ENCODE measurements at regions of chr12 and their contacts with region 1.

Region 1: DNA sequence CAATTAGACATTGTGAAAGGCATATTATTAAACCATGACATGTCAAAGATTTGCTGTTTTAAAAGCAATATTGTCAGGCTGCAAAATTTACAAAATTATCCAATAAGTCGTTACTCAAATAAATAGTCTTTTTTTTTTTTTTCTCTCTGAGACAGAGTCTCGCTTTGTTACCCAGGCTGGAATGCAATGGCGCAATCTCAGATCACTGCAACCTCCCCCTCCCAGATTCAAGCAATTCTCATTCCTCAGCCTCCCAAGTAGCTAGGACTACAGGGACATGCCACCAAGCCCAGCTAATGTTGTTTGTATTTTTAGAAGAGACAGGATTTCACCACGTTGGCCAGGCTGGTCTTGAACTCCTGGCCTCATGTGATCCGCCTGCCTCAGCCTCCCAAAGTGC is 216.2 kb upstream of the KITLG start:
- DNase-seq: peak; percentile 7
- ATAC-seq: no peak
- H3K4me3 ChIP-seq: no peak overlapping the region
- H3K27ac ChIP-seq: no peak overlapping the region
- H3K4me1 ChIP-seq: no peaks in the 10 kb centered on the region
- H3K27me3 ChIP-seq: no peaks in the 10 kb centered on the region
- CTCF ChIP-seq: no peak
- EP300 ChIP-seq: no peak
- POLR2A ChIP-seq: no peak
- RAD21 ChIP-seq: no peak

Region 2: GRCh38 chr12:88453323-88453722 is 343.1 kb before region 1 on chr12:
- CTCF ChIA-PET with region 1: no interaction called
- POLR2A ChIA-PET with region 1: no interaction called
- in situ Hi-C with region 1: no loop called
- intact Hi-C with region 1: loop called (anchors 5 kb)
- DNase-seq: no peak
- ATAC-seq: no peak
- H3K4me3 ChIP-seq: no peak overlapping the region
- H3K27ac ChIP-seq: no peak overlapping the region
- H3K4me1 ChIP-seq: peaks cover 6% of the 10 kb centered on the region
- H3K27me3 ChIP-seq: no peaks in the 10 kb centered on the region
- CTCF ChIP-seq: no peak
- EP300 ChIP-seq: no peak
- POLR2A ChIP-seq: no peak
- RAD21 ChIP-seq: no peak

Region 3: GRCh38 chr12:88650715-88651114 is 145.7 kb before region 1 on chr12:
- CTCF ChIA-PET with region 1: no interaction called
- POLR2A ChIA-PET with region 1: no interaction called
- in situ Hi-C with region 1: no loop called
- intact Hi-C with region 1: no loop called
- DNase-seq: no peak
- ATAC-seq: no peak
- H3K4me3 ChIP-seq: no peak overlapping the region
- H3K27ac ChIP-seq: no peak overlapping the region
- H3K4me1 ChIP-seq: no peaks in the 10 kb centered on the region
- H3K27me3 ChIP-seq: no peaks in the 10 kb centered on the region
- CTCF ChIP-seq: no peak
- EP300 ChIP-seq: no peak
- POLR2A ChIP-seq: no peak
- RAD21 ChIP-seq: no peak